ENCODE measurements at regions of chr1 and their contacts with region 1.

Region 1: GRCh38 chr1:25425098-25426085 is 4.8 kb upstream of the RHCE start:
- DNase-seq: no peak
- ATAC-seq: no peak
- H3K4me3 ChIP-seq: no peak overlapping the region
- H3K27ac ChIP-seq: no peak overlapping the region
- H3K4me1 ChIP-seq: peaks cover 0 to 7% (median 5%) of the 10 kb centered on the region in 9 donors
- H3K27me3 ChIP-seq: no peaks in the 10 kb centered on the region
- CTCF ChIP-seq: no peak

Region 2: DNA sequence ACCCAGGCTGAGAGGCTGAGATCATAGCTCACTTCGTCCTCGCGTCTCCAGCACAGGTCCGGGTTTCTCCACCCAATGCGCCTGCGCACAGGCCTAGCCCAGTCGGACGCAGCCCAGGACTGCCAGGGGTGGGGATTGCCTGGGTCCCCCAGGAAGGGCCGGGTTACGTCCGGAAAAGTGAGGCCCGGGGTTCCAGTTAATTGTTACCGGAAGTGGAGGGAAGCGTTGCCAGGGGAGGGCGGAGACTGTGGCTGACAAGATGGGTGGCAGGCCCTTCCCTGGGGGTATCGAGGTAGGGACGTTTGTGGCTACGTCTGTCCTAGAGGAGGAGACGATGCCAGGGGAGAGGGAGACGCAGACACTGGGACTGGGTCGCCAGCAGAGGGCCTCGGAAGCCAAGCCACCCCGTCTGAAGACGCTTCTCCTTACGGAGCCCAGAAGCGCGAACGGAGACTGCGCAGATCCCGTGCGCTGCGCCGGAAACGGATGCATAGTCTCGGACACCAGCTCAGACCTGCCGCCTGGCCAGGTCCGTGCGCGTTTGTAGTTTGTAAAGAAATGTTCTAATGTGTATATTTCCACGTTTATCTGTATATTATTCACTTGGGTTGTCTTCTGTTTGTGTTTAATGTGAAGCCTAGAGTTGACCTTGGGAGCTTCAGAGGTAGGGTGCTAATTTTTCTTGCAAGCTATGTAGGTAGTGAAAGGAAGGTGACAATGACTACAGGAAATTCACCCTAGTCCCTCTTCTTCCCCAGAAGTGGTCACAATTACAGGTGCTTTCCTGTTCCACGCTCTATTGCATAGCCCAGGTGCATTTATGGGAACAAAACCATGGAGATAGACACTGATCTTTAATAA is 185.5 kb before region 1 on chr1:
- intact Hi-C with region 1: no loop called
- DNase-seq: peak; percentile 89 to 92
- ATAC-seq: peak; percentile 90 to 96 (median 95)
- H3K4me3 ChIP-seq: peak overlapping the region; percentile 20 to 61 (median 48)
- H3K27ac ChIP-seq: peak overlapping the region; percentile 80 to 94 (median 88)
- H3K4me1 ChIP-seq: peaks cover 7 to 78% (median 61%) of the 10 kb centered on the region in 9 donors
- H3K27me3 ChIP-seq: no peaks in the 10 kb centered on the region
- CTCF ChIP-seq: peak; percentile 47 to 79 (median 63)

Region 3: GRCh38 chr1:25520446-25521061 is 95.2 kb after region 1 on chr1:
- intact Hi-C with region 1: loop called in 1 of 10 experiments (anchors 10 kb)
- DNase-seq: peak; percentile 44 to 62
- ATAC-seq: peak in 2 of 8 donors; percentile 37 to 51
- H3K4me3 ChIP-seq: no peak overlapping the region
- H3K27ac ChIP-seq: no peak overlapping the region
- H3K4me1 ChIP-seq: peaks cover 0 to 6% (median 0%) of the 10 kb centered on the region in 9 donors
- H3K27me3 ChIP-seq: peaks cover 0 to 3% (median 0%) of the 10 kb centered on the region in 7 donors
- CTCF ChIP-seq: peak; percentile 66 to 90 (median 84)

Region 4: DNA sequence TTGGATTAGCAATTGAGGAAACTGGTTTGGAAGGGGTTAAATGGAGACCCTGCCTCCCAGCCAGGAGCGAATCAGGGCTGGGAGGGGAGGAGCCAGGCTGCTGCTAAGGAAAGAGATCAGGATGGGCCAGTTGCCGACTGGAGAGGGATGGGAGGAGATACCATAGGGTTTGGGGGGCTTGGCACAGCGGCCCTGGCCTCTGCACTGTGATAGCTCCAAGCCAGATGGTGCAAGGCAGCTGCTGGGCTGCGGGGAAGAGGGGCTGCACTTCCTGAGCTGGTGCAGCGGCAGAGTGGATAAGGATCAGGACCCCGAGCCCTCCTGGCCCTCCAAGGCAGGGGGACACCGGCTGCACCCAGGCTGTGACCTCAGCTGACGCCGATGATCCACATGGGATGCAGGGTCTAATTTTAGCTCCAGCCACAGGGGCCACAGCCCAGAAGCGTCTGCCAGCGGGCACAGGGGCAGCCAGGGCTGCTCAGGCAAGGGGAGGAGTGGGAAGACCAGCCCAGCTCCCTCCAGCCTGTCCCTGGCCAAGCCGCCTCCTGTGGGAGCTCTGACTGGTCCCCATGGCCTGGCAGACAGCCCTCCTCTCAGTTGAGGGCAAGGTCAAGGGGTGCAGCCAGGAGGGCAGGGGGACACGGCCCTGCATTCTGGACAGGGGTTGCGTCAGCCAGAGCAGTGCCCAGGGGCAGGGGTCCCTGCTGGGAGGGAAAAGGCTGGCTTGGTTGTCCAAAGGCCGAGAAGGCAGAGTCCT is 596.4 kb after region 1 on chr1 and contains the start of gene EXTL1:
- intact Hi-C with region 1: no loop called
- DNase-seq: peak; percentile 77 to 79
- ATAC-seq: peak; percentile 79 to 89 (median 82)
- H3K4me3 ChIP-seq: peak within 1 kb of the TSS in 7 of 10 donors; percentile 26 to 49 (median 45)
- H3K27ac ChIP-seq: peak within 1 kb of the TSS; percentile 58 to 97 (median 84)
- H3K4me1 ChIP-seq: peaks cover 9 to 71% (median 44%) of the 10 kb centered on the region in 9 donors
- H3K27me3 ChIP-seq: no peaks in the 10 kb centered on the region
- CTCF ChIP-seq: no peak
- total RNA-seq, gene EXTL1: 1.1 to 17.0 (median 9.1) TPM

Region 5: GRCh38 chr1:26358411-26359384 is 933.3 kb after region 1 on chr1:
- intact Hi-C with region 1: no loop called
- DNase-seq: no peak
- ATAC-seq: no peak
- H3K4me3 ChIP-seq: no peak overlapping the region
- H3K27ac ChIP-seq: no peak overlapping the region
- H3K4me1 ChIP-seq: peaks cover 0 to 13% (median 10%) of the 10 kb centered on the region in 9 donors
- H3K27me3 ChIP-seq: peaks cover 16 to 92% (median 78%) of the 10 kb centered on the region in 7 donors
- CTCF ChIP-seq: no peak